ENCODE measurements at regions of chr6 and their contacts with region 1.

Region 1: GRCh38 chr6:27518881-27519795 is 46.2 kb upstream of the ZNF184 start:
- DNase-seq: peak; percentile 70
- CTCF ChIP-seq: peak; percentile 67

Region 2: GRCh38 chr6:27352850-27353249 is 166.3 kb before region 1 on chr6:
- CTCF ChIA-PET with region 1: no interaction called
- POLR2A ChIA-PET with region 1: no interaction called
- DNase-seq: no peak
- CTCF ChIP-seq: no peak

Region 3: DNA sequence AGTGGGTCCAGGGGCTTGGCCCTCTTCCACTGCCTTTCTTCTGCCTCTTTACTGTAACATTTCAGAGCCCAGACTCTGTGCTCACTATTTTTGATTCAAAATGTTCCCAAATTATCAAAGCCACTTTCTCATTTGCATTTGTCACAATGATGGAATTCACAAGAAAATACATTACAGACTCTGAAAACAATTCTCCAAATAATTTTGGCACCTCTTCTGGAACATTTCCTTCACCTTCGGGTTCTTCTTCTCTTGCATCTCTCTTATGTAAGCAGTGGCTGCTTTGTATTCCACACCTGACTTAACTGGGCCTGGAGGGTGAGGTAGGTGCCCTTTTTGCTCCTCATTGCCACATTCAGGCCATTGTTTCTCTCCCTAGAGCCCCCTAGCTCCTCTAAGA is 76.2 kb before region 1 on chr6:
- CTCF ChIA-PET with region 1: no interaction called
- POLR2A ChIA-PET with region 1: no interaction called
- DNase-seq: no peak
- CTCF ChIP-seq: no peak

Region 4: GRCh38 chr6:27479319-27480182 is 39.6 kb before region 1 on chr6:
- CTCF ChIA-PET with region 1: no interaction called
- POLR2A ChIA-PET with region 1: no interaction called
- DNase-seq: peak; percentile 55
- CTCF ChIP-seq: no peak

Region 5: DNA sequence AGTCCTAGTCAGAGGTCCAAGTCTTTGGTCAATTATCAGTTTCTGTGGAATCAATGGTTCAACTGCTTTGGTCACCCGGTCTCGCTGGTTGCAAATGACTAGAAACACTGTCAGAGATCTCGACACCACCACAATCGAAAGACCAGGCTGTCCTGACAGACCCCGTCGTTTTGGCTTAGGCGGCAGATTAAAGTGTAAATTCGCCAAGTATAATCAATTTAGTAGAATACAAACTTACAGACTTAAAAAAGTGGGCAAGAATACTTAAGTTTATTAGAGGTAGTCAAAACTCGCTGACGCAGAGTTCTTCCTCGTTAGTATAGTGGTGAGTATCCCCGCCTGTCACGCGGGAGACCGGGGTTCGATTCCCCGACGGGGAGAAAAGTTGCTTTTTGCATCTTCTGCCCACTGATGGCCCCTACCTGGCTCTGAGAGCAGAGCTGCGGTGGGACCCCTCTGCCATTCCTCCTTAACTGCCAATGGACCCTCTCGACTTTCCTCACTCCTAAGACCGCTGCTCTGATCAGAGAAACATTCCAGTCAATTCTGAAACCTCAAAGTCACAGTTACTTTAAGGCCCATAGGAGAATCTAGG is 15.6 kb before region 1 on chr6:
- CTCF ChIA-PET with region 1: interaction called, 35 read pairs
- POLR2A ChIA-PET with region 1: no interaction called
- DNase-seq: no peak
- CTCF ChIP-seq: no peak

Region 6: GRCh38 chr6:27553123-27553904 is 34.2 kb after region 1 on chr6:
- CTCF ChIA-PET with region 1: interaction called, 10 read pairs
- POLR2A ChIA-PET with region 1: no interaction called
- DNase-seq: peak; percentile 57
- CTCF ChIP-seq: no peak

Measured in GM10248 (cell line).